ENCODE measurements at regions of chr20 and their contacts with region 1.

Region 1: GRCh38 chr20:11935212-11936154 is 17.8 kb downstream of the BTBD3 start:
- DNase-seq: no peak
- H3K4me3 ChIP-seq: no peak overlapping the region
- H3K27ac ChIP-seq: no peak overlapping the region
- H3K4me1 ChIP-seq: peaks cover 0 to 4% of the 10 kb centered on the region in 2 donors
- H3K27me3 ChIP-seq: no peaks in the 10 kb centered on the region
- CTCF ChIP-seq: no peak
- POLR2A ChIP-seq: no peak

Region 2: GRCh38 chr20:11682285-11682684 is 253.2 kb before region 1 on chr20:
- intact Hi-C with region 1: loop called (anchors 5 kb)
- DNase-seq: no peak
- H3K4me3 ChIP-seq: no peak overlapping the region
- H3K27ac ChIP-seq: no peak overlapping the region
- H3K4me1 ChIP-seq: no peaks in the 10 kb centered on the region
- H3K27me3 ChIP-seq: peaks cover 0 to 5% of the 10 kb centered on the region in 2 donors
- CTCF ChIP-seq: no peak
- POLR2A ChIP-seq: no peak

Region 3: DNA sequence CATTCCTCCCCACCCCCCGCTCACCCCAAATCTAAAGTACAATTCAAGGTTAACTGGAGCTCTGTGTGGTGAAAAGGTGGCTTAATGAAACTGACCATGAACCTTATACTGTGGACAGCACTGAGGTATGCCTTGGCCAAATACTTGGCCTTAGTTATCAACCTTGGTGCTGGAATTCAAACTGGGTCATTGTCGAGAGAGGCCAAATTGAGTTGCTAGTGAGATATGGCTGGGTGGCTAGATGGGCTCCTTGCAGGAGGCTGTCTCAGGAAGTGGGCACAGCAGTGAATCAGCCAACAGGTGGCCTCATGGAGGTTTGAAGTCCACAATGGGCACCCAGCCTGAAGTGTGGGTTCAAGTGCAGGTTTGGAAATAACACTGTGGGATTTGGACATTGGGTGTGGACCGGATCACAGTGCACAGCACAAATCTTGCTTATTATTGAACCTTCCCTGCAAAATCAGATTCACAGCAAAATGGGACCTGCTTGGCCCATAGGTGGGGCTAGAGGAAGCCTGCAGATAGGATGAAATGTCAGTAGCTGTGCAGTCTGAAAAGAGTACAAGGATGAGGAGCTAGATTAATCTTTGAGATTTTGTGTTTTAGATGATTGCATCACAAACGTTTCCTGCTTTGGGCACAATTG is 23.3 kb before region 1 on chr20:
- intact Hi-C with region 1: no loop called
- DNase-seq: no peak
- H3K4me3 ChIP-seq: no peak overlapping the region
- H3K27ac ChIP-seq: no peak overlapping the region
- H3K4me1 ChIP-seq: peaks cover 0 to 5% of the 10 kb centered on the region in 2 donors
- H3K27me3 ChIP-seq: no peaks in the 10 kb centered on the region
- CTCF ChIP-seq: no peak
- POLR2A ChIP-seq: no peak